GM10248 (cell line): ENCODE measurements at regions of chr2 and their contacts with region 1.

Region 1: GRCh38 chr2:171598713-171599319 is 76.5 kb downstream of the CYBRD1 start:
- DNase-seq: peak; percentile 80
- CTCF ChIP-seq: peak; percentile 84

Region 2: DNA sequence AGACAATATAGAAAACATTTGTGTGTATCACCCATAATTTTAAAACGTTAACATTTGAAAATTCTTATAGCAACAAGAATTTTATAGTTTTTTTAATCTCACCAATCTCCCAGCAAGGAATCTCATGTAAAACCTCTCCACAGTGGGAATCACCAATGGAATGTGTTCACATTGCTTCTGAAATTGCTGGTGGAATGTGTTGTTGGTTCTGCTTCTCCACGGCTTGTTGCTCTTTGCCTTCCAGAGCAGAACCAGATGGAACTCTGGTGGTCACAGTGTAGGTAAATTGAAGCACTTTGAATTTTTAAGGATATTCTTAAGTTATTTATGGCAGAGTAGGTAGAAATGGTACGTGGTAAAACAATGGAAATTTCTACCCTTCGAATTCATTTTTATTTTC is 129.6 kb before region 1 on chr2:
- CTCF ChIA-PET with region 1: no interaction called
- POLR2A ChIA-PET with region 1: no interaction called
- DNase-seq: no peak
- CTCF ChIP-seq: no peak

Region 3: GRCh38 chr2:171574149-171574795 is 24.5 kb before region 1 on chr2:
- CTCF ChIA-PET with region 1: interaction called, 11 read pairs
- POLR2A ChIA-PET with region 1: no interaction called
- DNase-seq: peak; percentile 89
- CTCF ChIP-seq: peak; percentile 90

Region 4: GRCh38 chr2:171579481-171579880 is 19.3 kb before region 1 on chr2:
- CTCF ChIA-PET with region 1: interaction called, 11 read pairs
- POLR2A ChIA-PET with region 1: no interaction called
- DNase-seq: no peak
- CTCF ChIP-seq: no peak

Region 5: DNA sequence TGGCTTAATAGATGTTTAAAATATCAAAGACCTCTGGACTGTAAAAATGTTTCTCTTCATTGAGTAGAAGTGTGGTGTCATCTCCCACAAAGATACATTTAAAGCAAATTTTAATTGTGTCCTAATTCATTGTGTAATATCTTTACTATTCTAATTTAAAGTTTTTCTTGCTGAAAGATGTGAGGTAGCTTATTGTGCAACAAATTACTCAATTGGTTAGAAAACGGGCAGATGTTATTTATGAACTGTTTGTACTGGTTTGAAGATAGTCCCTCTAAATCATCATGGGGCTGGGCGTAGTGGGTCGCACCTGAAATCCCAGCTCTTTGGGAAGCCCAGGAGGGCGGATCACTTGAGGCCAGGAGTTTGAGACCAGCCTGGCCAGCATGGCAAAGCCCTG is 11.2 kb before region 1 on chr2:
- CTCF ChIA-PET with region 1: interaction called, 26 read pairs
- POLR2A ChIA-PET with region 1: no interaction called
- DNase-seq: no peak
- CTCF ChIP-seq: no peak

Region 6: DNA sequence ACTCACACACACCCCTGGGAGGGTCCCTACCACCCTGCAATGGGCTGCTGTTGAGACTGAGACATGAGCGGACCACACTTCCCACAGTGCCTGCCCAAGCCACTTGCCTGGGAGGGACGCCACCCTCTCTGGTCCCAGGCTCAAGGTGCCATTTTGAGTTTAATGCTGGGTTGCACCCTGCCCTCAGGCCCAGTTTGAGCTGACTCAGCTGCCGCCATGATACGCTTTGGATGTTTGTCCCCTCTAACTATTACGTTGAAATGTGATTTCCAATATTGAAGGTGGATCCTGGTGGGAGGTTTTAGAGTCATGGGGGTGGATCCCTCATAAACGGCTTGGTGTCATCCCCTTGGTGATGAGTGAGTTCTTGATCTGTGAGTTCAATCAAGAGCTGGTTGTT is 12.0 kb after region 1 on chr2:
- CTCF ChIA-PET with region 1: interaction called, 13 read pairs
- POLR2A ChIA-PET with region 1: no interaction called
- DNase-seq: no peak
- CTCF ChIP-seq: no peak

Region 7: GRCh38 chr2:172102391-172103278 is 503.8 kb after region 1 on chr2 and contains the start of gene DLX2:
- CTCF ChIA-PET with region 1: interaction called, 10 read pairs
- POLR2A ChIA-PET with region 1: no interaction called
- DNase-seq: peak; percentile 88
- CTCF ChIP-seq: no peak

Region 8: GRCh38 chr2:172131713-172132555 is 533.1 kb after region 1 on chr2:
- CTCF ChIA-PET with region 1: interaction called, 19 read pairs
- POLR2A ChIA-PET with region 1: no interaction called
- DNase-seq: no peak
- CTCF ChIP-seq: no peak